Activated CD4-positive, alpha-beta memory T cell treated with anti-CD3 and anti-CD28 coated beads for 36 hours (primary cell): ENCODE measurements at regions of chr4 and their contacts with region 1.

Region 1: DNA sequence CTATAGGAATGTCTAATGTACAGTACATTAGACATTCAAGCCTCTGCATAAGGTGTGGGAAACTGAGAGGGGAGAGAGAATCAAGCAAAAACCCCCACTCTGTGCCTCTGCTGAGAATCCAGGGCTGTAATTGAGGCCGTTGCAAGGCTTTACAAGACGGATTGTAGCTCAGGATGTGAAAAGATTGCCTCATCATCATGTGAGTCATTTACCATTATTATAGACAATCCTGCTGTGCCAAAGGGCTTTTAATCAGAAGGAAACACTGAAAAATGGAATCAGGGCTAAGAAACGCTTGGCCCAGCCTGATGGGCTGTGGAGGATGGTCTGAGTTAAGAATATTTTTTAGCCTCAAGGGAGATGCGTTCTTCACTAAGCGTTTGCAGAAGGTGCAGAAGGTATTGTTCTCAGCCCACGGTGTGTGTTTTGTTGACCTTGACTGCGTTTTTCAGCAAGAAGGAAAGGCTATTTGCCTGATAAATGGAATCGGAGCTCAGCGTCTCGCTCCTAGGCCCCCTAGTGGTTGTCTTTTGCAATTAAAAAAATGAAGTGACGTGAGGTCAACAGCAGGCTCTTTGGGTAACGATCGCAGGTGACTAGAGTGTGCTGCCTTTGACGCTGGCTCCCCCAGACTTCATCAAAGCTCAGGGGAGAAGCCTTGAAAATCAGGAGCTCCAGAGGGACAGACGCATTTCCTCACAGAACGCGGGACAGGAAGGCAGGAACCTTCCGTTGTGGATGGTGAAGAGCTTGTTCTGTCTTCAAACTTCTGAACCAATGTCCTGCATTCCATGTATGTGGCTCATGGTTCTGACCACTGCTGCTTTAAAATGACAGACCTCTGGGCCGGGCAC is 18.1 kb upstream of the CHRNA9 start:
- DNase-seq: peak; percentile 77
- H3K4me3 Mint-ChIP-seq: peak overlapping the region; percentile 78
- H3K27ac Mint-ChIP-seq: peak overlapping the region; percentile 94
- H3K4me1 Mint-ChIP-seq: peaks cover 36% of the 10 kb centered on the region
- H3K27me3 Mint-ChIP-seq: no peaks in the 10 kb centered on the region

Region 2: DNA sequence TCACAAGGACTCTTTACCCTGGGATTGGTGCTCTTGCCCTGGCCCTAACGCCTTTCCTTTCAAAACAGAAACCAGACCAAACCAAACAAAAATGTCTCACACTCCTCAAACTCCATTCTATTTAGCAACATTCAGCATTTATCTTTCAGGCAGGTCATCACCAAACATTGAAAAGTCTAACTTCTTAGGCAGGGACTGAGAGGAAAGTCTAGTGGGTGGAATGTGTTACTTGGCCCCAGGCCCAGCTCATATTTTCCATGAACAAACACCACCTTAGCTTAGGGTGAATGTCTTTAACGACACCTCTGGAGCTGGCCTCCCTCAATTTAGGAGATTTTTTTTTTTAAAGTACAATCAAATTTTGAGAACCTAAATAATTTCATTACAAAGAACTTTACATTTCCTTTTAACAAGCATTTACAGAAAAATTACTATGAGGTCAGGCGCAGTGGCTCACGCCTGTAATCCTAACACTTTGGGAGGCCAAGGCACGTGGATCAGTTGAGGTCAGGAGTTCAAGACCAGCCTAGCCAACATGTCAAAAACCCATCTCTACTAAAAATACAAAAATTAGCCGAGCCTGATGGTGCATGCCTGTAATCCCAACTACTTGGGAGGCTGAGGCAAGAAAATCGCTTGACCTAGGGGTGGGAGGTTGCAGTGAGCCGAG is 270.6 kb before region 1 on chr4:
- CTCF ChIA-PET with region 1: no interaction called
- POLR2A ChIA-PET with region 1: no interaction called
- intact Hi-C with region 1: no loop called
- DNase-seq: peak; percentile 69
- H3K4me3 Mint-ChIP-seq: no peak overlapping the region
- H3K27ac Mint-ChIP-seq: peak overlapping the region; percentile 73
- H3K4me1 Mint-ChIP-seq: peaks cover 5% of the 10 kb centered on the region
- H3K27me3 Mint-ChIP-seq: no peaks in the 10 kb centered on the region

Region 3: DNA sequence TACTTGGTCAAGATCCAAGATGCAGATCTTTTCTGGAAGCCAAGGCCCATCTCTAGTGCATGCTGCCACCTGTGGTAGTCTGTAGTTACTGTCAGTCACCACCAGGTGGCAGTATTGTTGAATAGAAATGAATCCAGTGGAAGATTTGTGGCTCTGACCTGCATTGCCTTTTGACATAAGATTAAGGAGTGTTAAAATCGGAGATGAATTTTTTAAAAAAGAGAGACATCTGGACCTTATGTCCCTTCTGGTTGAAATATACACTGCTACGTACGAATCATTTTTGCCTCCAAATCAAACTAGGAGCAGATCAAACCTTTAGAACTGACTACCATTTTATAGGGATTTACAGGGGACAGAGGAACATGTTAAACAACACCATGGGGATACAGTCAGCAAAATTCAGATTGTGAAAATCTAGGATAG is 167.0 kb before region 1 on chr4:
- CTCF ChIA-PET with region 1: interaction called, 14 read pairs
- POLR2A ChIA-PET with region 1: no interaction called
- intact Hi-C with region 1: loop called (anchors 2 kb)
- DNase-seq: peak; percentile 74
- H3K4me3 Mint-ChIP-seq: no peak overlapping the region
- H3K27ac Mint-ChIP-seq: no peak overlapping the region
- H3K4me1 Mint-ChIP-seq: peaks cover 27% of the 10 kb centered on the region
- H3K27me3 Mint-ChIP-seq: no peaks in the 10 kb centered on the region

Region 4: DNA sequence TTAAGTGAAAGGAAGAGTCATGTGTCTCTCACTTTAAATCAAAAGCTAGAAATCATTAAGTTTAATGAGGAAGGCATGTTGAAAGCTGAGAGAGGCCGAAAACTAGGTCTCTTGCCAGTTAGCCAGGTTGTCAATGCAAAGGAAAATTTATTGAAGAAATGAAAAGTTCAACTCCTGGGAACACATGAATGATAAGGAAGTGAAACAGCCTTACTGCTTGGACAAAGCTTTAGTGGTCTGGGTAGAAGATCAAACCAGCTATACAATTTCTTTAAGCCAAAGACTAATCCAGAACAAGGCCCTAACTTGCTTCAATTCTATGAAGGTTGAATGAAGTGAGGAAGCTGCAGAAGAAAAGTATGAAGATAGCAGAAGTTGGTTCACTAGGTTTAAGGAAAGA is 95.3 kb before region 1 on chr4:
- CTCF ChIA-PET with region 1: interaction called, 30 read pairs
- POLR2A ChIA-PET with region 1: interaction called, 11 read pairs
- intact Hi-C with region 1: no loop called
- DNase-seq: no peak
- H3K4me3 Mint-ChIP-seq: peak overlapping the region; percentile 37
- H3K27ac Mint-ChIP-seq: peak overlapping the region; percentile 75
- H3K4me1 Mint-ChIP-seq: peaks cover 91% of the 10 kb centered on the region
- H3K27me3 Mint-ChIP-seq: no peaks in the 10 kb centered on the region

Region 5: DNA sequence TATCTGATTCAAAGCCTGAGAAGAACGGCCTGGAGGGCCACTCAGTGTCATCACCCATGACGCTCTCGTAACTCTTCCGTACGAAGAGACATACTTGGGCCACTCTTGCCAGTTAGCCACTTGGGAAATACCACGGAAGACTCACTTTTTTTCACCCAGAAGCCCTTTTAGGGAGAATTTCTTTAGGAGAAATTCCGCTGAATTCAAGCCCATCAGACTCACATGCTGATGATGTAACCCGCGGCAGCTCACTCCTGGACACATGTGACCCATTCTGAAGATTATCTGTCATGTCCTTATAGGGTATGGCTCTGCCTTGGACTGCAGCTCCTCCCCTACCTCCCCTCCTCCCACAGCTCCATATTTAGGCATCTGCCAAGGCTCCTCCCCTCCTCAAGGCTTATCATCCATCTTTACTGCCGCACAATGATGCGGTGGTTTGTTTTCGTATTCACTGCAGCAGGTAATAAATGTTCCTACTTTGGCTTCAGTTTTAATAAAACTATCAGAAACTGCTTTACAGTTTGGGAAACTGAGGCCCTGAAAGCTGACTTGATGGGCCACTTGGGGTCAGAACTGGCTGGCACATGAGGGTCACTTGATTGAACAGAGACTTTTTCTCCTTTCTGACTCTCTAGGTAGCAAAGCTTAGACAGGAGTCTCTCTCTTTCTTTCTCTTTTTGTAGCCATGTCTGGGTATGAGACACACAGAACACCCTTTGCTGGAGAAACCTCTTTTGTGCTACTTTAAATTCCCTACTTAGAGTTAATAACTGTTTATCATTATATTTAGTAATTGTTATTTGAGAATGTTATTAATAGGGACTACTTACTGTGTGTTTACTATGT is 78.1 kb before region 1 on chr4:
- CTCF ChIA-PET with region 1: interaction called, 70 read pairs
- POLR2A ChIA-PET with region 1: interaction called, 6 read pairs
- intact Hi-C with region 1: no loop called
- DNase-seq: peak; percentile 91
- H3K4me3 Mint-ChIP-seq: peak overlapping the region; percentile 75
- H3K27ac Mint-ChIP-seq: peak overlapping the region; percentile 96
- H3K4me1 Mint-ChIP-seq: peaks cover 88% of the 10 kb centered on the region
- H3K27me3 Mint-ChIP-seq: no peaks in the 10 kb centered on the region

Region 6: DNA sequence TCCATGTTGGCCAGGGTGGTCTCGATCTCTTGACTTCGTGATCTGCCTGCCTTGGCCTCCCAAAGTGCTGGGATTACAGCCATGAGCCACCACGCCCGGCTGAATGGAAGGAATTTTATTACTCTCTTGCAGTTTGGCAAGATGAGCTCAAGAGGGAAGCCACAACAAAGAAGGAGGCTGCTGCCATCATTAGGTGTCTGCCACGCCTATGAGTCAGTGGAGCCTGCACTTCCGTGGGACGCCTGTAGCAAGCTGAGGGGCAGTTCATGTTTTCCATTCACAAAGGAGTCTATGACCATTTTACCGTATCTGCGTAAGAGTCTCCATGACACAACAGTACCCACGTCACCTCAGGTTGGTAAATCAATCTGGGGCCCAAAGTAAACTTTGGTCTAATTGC is 33.0 kb before region 1 on chr4:
- CTCF ChIA-PET with region 1: interaction called, 12 read pairs
- POLR2A ChIA-PET with region 1: interaction called, 3 read pairs
- intact Hi-C with region 1: no loop called
- DNase-seq: peak; percentile 92
- H3K4me3 Mint-ChIP-seq: peak overlapping the region; percentile 55
- H3K27ac Mint-ChIP-seq: peak overlapping the region; percentile 82
- H3K4me1 Mint-ChIP-seq: peaks cover 60% of the 10 kb centered on the region
- H3K27me3 Mint-ChIP-seq: no peaks in the 10 kb centered on the region

Region 7: GRCh38 chr4:40502934-40503333 is 185.9 kb after region 1 on chr4:
- CTCF ChIA-PET with region 1: no interaction called
- POLR2A ChIA-PET with region 1: no interaction called
- intact Hi-C with region 1: no loop called
- DNase-seq: no peak
- H3K4me3 Mint-ChIP-seq: no peak overlapping the region
- H3K27ac Mint-ChIP-seq: peak overlapping the region; percentile 39
- H3K4me1 Mint-ChIP-seq: peaks cover 10% of the 10 kb centered on the region
- H3K27me3 Mint-ChIP-seq: no peaks in the 10 kb centered on the region

Region 8: DNA sequence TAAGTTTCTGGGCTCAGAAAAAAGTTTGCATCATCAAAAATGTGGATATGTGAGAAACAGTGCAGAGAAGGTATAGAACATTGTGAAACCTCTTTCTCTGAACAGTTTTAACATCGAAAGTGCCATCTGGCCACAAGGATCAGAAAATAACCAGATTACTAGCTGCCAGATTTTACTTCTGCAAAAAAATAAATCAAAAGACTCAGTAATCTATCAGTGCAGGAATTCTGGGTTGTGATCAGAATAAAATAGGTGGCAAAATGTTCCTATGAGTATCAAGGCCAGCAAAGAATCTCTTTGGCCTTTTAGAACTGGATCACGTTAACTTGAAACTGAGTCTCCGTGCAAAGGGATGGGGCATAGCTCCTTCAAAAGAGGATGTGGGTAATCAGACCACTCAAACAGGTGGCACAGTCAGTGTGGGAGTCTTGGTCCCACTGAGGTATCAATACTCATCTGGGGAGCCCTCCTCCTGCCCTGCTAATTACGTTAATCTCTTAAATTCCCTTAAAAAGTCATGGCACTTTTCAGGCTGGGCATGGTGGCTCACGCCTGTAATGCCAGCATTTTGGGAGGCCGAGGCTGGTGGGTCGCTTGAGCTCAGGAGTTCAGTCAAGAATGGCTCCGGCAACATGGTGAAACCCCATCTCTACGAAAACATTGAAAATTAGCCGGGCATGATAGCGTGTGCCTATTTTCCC is 339.3 kb after region 1 on chr4:
- CTCF ChIA-PET with region 1: no interaction called
- POLR2A ChIA-PET with region 1: no interaction called
- intact Hi-C with region 1: no loop called
- DNase-seq: peak; percentile 22
- H3K4me3 Mint-ChIP-seq: no peak overlapping the region
- H3K27ac Mint-ChIP-seq: no peak overlapping the region
- H3K4me1 Mint-ChIP-seq: peaks cover 10% of the 10 kb centered on the region
- H3K27me3 Mint-ChIP-seq: no peaks in the 10 kb centered on the region